Left ventricle myocardium superior (tissue), 1 donor: ENCODE measurements at regions of chr7 and their contacts with region 1.

Region 1: GRCh38 chr7:79452032-79452494 is 1.4 kb downstream of the MAGI2 start:
- DNase-seq: peak; percentile 90
- ATAC-seq: peak; percentile 82

Region 2: GRCh38 chr7:78970440-78970916 is 481.6 kb before region 1 on chr7:
- intact Hi-C with region 1: no loop called
- DNase-seq: no peak
- ATAC-seq: no peak

Region 3: DNA sequence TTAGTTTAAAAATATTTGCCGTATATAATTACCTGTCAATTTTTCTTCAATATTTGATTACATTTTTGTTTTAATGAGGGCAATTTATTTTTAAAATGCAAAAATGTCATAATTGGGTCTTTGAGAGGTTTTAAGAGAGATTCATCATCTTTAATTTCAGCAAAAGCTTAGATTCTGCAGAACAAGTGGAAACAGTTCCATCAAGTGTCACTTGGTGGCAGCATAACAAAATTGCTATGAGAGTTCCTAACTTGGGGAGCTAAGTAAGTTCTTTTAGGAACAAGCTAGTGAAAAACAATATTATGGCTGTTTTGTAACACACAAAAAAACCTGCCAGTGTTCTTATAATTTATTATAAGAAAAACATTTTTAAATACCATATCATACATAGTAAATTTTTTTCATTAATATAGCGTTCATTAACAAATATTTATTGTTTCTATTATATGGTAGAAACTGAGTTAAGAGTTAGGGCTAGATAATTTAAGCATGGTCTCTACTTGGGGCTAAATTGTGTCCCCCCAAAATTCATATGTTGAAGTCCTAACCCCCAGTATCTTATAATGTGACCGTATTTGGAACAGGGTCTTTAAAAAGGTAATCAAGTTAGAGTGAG is 153.8 kb before region 1 on chr7:
- intact Hi-C with region 1: loop called (anchors 10 kb)
- DNase-seq: no peak
- ATAC-seq: no peak